ENCODE measurements at regions of chr7 and their contacts with region 1.

Region 1: DNA sequence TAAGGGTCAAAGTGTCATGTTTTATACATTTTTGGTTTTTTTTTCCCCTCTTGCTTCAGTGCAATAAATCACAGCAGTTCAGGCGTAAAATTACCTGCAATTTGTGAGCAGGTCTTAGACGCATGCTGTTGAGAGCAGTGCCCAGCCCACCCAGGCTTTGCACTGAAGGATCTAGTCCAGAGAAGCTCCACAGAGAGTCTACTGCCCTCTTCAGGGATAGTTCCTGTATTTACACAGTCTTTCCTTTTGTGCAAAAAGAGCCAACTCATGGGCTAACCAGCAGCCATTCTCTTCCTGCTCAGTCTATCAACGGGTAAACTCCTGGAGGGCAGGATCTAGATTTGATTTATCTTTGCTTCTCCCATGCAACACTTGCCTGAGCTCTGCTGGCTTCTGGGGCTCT is 82.2 kb upstream of the NAMPT start:
- H3K4me3 ChIP-seq: no peak overlapping the region
- H3K27ac ChIP-seq: no peak overlapping the region
- H3K4me1 ChIP-seq: no peaks in the 10 kb centered on the region
- CTCF ChIP-seq: no peak

Region 2: GRCh38 chr7:106345421-106346166 is 21.4 kb before region 1 on chr7:
- CTCF ChIA-PET with region 1: no interaction called
- POLR2A ChIA-PET with region 1: no interaction called
- H3K4me3 ChIP-seq: no peak overlapping the region
- H3K27ac ChIP-seq: no peak overlapping the region
- H3K4me1 ChIP-seq: no peaks in the 10 kb centered on the region
- CTCF ChIP-seq: no peak

Region 3: GRCh38 chr7:106377847-106378361 is 10.9 kb after region 1 on chr7:
- CTCF ChIA-PET with region 1: interaction called, 10 read pairs
- POLR2A ChIA-PET with region 1: no interaction called
- H3K4me3 ChIP-seq: no peak overlapping the region
- H3K27ac ChIP-seq: no peak overlapping the region
- H3K4me1 ChIP-seq: no peaks in the 10 kb centered on the region
- CTCF ChIP-seq: no peak

Region 4: DNA sequence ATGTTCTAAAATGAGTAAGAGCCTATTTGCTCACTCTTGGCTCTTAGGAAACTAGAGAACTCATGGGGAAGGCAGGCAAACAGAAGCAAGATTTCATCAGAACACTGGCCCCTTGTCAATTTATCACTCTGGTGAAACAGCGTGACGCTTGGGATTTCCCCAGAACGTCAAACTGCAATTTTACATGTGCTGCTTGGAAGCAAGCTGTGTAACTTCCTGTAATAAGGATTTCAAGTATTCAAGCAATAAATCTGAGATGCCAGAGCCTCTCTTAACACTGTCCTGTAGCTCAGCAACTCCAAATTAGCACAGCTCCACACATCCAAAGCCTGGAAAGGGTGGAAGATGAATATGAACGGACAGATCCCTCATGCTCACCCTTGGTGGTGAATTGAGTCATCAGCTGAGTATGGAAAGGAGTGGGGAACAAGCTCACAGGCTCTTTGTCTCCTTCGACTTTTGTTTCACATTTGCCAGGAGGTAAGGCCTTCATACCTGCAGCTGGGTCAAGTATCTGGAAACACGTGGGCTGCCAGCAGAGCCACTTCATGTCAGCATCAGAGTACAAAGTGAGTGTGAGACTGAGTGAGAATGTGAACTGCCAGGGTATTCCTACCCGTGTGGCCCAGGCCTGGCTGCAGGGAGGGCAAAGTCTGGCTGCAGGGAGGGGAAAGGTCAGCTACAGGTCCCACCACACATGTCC is 58.1 kb after region 1 on chr7:
- CTCF ChIA-PET with region 1: no interaction called
- POLR2A ChIA-PET with region 1: no interaction called
- H3K4me3 ChIP-seq: no peak overlapping the region
- H3K27ac ChIP-seq: no peak overlapping the region
- H3K4me1 ChIP-seq: no peaks in the 10 kb centered on the region
- CTCF ChIP-seq: no peak

Measured in HEK293 (cell line).